H1 (cell line): ENCODE measurements at regions of chr17 and their contacts with region 1.

Region 1: GRCh38 chr17:39754161-39754951 is 16.6 kb downstream of the GRB7 start:
- DNase-seq: peak in 1 of 2 experiments; percentile 96
- H3K4me3 ChIP-seq: peak overlapping the region; percentile 30 to 82 (median 74)
- H3K27ac ChIP-seq: no peak overlapping the region
- H3K4me1 ChIP-seq: peaks cover 9 to 29% (median 21%) of the 10 kb centered on the region in 4 experiments
- H3K27me3 ChIP-seq: peaks cover 0 to 3% (median 2%) of the 10 kb centered on the region in 4 experiments; a peak in 2 of 7 replicates
- CTCF ChIP-seq: peak; percentile 81 to 89 (median 89)
- EP300 ChIP-seq: no peak
- POLR2A ChIP-seq: 0 out of 3 replicates have a peak, but pooled peaks of 1 of the 2 experiments have one; percentile 32
- RAD21 ChIP-seq: peak; percentile 89 to 92

Region 2: GRCh38 chr17:39631403-39631802 is 123.0 kb before region 1 on chr17:
- CTCF ChIA-PET with region 1: interaction called, 17 read pairs
- POLR2A ChIA-PET with region 1: interaction called, 4 read pairs
- DNase-seq: no peak
- H3K4me3 ChIP-seq: peak overlapping the region in 1 of 4 experiments; percentile 2; a peak in 1 of 8 replicates
- H3K27ac ChIP-seq: no peak overlapping the region
- H3K4me1 ChIP-seq: peaks cover 11 to 57% (median 49%) of the 10 kb centered on the region in 4 experiments
- H3K27me3 ChIP-seq: peaks cover 2 to 19% (median 15%) of the 10 kb centered on the region in 4 experiments; a peak in 6 of 7 replicates
- CTCF ChIP-seq: no peak
- EP300 ChIP-seq: no peak
- POLR2A ChIP-seq: no peak
- RAD21 ChIP-seq: no peak

Region 3: DNA sequence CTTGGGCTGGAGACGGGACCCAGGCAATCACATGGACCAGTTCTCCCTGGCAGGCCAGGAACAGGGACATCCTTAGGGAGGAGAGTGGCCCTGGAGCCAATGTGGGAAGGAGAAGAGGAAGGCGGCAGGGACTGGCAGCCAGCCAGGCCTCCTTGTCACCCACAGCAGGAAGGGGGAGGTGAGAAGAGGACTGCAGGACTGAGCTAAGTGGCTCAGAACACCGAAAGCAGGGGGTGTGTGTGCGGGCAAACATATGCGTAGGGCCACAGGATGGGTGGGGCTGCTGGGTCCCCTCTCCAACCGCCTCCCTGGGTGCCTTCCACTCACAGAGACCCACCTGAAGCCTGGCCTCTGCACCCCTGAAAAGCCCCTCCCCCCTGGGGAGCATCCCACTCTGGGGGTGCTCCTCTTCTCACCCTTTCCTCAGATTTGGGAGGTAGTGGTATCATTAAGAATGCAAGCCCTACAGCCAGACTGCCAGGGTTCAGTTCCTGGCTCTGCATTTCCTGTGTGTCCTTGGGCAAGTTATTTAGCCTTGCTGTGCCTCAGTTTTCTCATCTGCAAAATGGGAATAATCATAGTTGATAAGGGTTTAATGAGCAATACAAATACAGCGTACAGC is 78.0 kb before region 1 on chr17:
- CTCF ChIA-PET with region 1: interaction called, 12 read pairs
- POLR2A ChIA-PET with region 1: interaction called, 3 read pairs
- DNase-seq: no peak
- H3K4me3 ChIP-seq: no peak overlapping the region
- H3K27ac ChIP-seq: no peak overlapping the region
- H3K4me1 ChIP-seq: peaks cover 0 to 15% (median 8%) of the 10 kb centered on the region in 4 experiments; a peak in 6 of 7 replicates
- H3K27me3 ChIP-seq: peaks cover 0 to 3% (median 0%) of the 10 kb centered on the region in 4 experiments; a peak in 1 of 7 replicates
- CTCF ChIP-seq: no peak
- EP300 ChIP-seq: no peak
- POLR2A ChIP-seq: no peak
- RAD21 ChIP-seq: no peak

Region 4: GRCh38 chr17:39738931-39739884 is 15.1 kb before region 1 on chr17:
- CTCF ChIA-PET with region 1: interaction called, 3 read pairs
- POLR2A ChIA-PET with region 1: interaction called, 19 read pairs
- DNase-seq: peak in 1 of 2 experiments; percentile 88
- H3K4me3 ChIP-seq: peak overlapping the region; percentile 54 to 86 (median 82)
- H3K27ac ChIP-seq: peak overlapping the region; percentile 89
- H3K4me1 ChIP-seq: peaks cover 5 to 31% (median 23%) of the 10 kb centered on the region in 4 experiments
- H3K27me3 ChIP-seq: no peaks in the 10 kb centered on the region
- CTCF ChIP-seq: no peak
- EP300 ChIP-seq: no peak
- POLR2A ChIP-seq: peak; percentile 29 to 34; a peak in 2 of 3 replicates
- RAD21 ChIP-seq: no peak